Right cardiac atrium (tissue), 5 donors: ENCODE measurements at regions of chr10 and their contacts with region 1.

Region 1: DNA sequence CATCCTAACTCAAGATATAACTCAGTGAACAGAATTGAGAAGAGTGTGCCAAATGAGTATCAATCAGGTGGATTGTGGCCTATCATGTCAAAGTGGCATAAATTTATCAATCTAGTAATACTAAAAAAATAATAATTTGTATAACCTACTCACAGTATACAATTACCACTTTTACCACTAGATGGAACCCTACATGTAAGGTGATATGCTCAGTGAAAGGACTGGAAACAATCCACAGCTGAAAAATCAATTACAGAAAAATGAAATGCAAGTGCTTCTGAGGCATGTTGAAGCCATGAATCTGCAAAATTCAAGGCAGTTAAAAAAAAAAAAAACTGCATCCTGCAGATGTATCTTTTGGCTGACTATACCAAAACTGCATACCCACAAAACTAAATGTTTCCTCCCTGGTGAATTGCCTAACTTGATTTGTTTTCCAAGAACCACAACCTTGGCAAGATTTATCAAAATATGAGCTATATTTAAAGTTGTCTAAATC is 13.9 kb downstream of the ARHGAP19 start:
- DNase-seq: no peak
- ATAC-seq: peak; percentile 81 to 82
- H3K4me3 ChIP-seq: no peak overlapping the region
- H3K27ac ChIP-seq: no peak overlapping the region
- H3K4me1 ChIP-seq: peaks cover 3% of the 10 kb centered on the region
- H3K27me3 ChIP-seq: no peaks in the 10 kb centered on the region

Region 2: DNA sequence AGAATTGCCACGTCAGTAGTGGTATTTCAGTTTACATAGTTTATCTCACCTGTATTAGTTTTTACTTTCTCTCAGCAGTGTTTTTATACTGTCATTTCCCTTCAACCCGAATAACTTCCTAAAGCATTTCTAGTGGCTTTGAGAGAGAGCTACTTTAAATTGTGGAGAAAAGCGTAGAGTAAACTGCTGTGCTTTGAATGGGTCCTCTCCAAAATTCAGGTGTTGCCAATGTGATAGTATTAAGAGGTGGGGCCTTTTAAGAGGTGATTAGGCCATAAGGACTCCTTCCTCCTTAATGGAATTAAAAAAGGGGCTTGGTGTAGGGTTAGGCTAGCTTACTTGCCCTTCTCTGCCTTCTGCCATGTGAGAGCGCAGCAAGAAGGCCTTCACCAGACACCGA is 348.1 kb before region 1 on chr10:
- intact Hi-C with region 1: no loop called
- DNase-seq: no peak
- ATAC-seq: no peak
- H3K4me3 ChIP-seq: no peak overlapping the region
- H3K27ac ChIP-seq: no peak overlapping the region
- H3K4me1 ChIP-seq: peaks cover 1% of the 10 kb centered on the region
- H3K27me3 ChIP-seq: no peaks in the 10 kb centered on the region

Region 3: GRCh38 chr10:97101166-97101940 is 177.2 kb before region 1 on chr10:
- intact Hi-C with region 1: no loop called
- DNase-seq: no peak
- ATAC-seq: no peak
- H3K4me3 ChIP-seq: no peak overlapping the region
- H3K27ac ChIP-seq: no peak overlapping the region
- H3K4me1 ChIP-seq: peaks cover 5% of the 10 kb centered on the region
- H3K27me3 ChIP-seq: no peaks in the 10 kb centered on the region

Region 4: DNA sequence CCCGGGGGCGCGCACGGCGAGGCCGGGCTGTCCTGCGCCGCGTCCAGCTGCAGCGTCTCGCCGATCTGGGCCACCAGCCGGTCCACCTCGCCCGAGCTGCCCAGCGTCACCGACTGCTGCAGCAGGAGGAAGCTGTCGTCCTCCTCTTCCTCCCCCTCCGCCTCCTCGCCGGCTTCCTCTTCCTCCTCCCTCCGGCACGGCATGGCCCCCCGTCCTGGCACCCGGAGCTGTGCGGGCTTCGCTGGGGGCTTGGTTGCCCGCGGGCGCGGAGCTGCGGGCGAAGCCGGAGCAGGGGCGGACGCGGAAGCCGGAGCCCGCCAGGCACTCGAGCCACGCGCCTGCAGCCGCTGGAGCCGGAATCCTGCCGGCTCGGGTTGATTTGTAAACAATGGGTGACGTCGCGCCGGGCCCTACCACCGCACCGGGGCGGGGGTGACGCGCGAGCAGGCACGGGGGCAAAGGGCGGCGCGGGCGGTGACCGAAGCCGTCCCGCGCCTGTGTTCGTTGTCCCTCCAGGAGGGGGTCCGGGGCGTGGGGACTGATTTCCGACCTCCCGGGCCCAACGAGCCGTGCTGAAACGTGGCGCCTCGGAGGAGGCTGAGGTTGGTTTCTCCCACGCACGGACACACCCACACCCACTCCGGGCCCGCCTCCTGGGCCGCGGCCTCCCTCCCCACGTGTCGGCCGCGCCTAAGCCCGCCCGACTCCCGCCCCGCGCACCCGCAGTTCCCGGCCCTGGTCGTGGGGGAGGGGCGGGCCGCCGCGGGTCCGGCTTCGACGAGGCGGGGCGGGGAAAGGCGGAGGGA is 56.0 kb after region 1 on chr10 and contains the start of gene FRAT2:
- intact Hi-C with region 1: loop called in 1 of 4 experiments (anchors 10 kb)
- DNase-seq: peak; percentile 92 to 97 (median 97)
- ATAC-seq: peak; percentile 98
- H3K4me3 ChIP-seq: peak within 1 kb of the TSS; percentile 67
- H3K27ac ChIP-seq: peak within 1 kb of the TSS; percentile 59
- H3K4me1 ChIP-seq: peaks cover 8% of the 10 kb centered on the region
- H3K27me3 ChIP-seq: no peaks in the 10 kb centered on the region
- total RNA-seq, gene FRAT2: 5.0 to 7.6 (median 7.5) TPM

Region 5: GRCh38 chr10:97349752-97350513 is 71.4 kb after region 1 on chr10:
- intact Hi-C with region 1: loop called in 3 of 4 experiments (anchors 10 kb)
- DNase-seq: no peak
- ATAC-seq: no peak
- H3K4me3 ChIP-seq: no peak overlapping the region
- H3K27ac ChIP-seq: no peak overlapping the region
- H3K4me1 ChIP-seq: no peaks in the 10 kb centered on the region
- H3K27me3 ChIP-seq: no peaks in the 10 kb centered on the region

Region 6: GRCh38 chr10:97355571-97355975 is 77.0 kb after region 1 on chr10:
- intact Hi-C with region 1: loop called in 2 of 4 experiments (anchors 10 kb)
- DNase-seq: no peak
- ATAC-seq: peak; percentile 30 to 73
- H3K4me3 ChIP-seq: no peak overlapping the region
- H3K27ac ChIP-seq: peak overlapping the region; percentile 25
- H3K4me1 ChIP-seq: no peaks in the 10 kb centered on the region
- H3K27me3 ChIP-seq: no peaks in the 10 kb centered on the region